GM12878 (cell line): ENCODE measurements at regions of chr12 and their contacts with region 1.

Region 1: GRCh38 chr12:10235761-10236631 is 23.3 kb downstream of the GABARAPL1 start:
- DNase-seq: no peak
- ATAC-seq: peak; percentile 73
- H3K4me3 ChIP-seq: no peak overlapping the region
- H3K27ac ChIP-seq: no peak overlapping the region
- H3K4me1 ChIP-seq: 0 out of 2 replicates have a peak, but pooled peaks cover 4% of the 10 kb centered on the region
- H3K27me3 ChIP-seq: no peaks in the 10 kb centered on the region; a peak in 1 of 4 replicates
- CTCF ChIP-seq: peak; percentile 66 to 80 (median 70)
- EP300 ChIP-seq: no peak
- POLR2A ChIP-seq: no peak
- RAD21 ChIP-seq: peak; percentile 94

Region 2: DNA sequence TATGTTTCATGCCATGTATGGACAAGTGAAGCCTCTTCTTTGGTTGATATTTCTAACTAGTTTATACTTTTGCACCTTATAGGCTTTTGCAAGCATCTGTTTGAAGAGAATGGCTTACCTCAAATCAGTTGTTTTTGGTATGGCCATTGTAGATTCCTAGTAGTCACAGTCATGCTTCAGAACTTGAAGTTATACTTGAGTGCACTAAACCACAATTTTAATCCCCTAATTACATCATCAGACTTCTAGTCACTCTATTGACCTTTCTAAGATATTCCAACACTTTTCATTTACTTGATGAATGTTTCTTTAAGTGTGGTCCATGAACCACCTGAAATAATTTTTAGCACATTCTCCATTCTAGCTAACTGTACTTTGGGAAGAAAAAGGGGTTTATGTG is 609.7 kb before region 1 on chr12:
- CTCF ChIA-PET with region 1: no interaction called
- POLR2A ChIA-PET with region 1: no interaction called
- RAD21 ChIA-PET with region 1: no interaction called
- SMC1A ChIA-PET with region 1: no interaction called
- in situ Hi-C with region 1: no loop called
- intact Hi-C with region 1: no loop called
- DNase-seq: no peak
- ATAC-seq: no peak
- H3K4me3 ChIP-seq: no peak overlapping the region
- H3K27ac ChIP-seq: no peak overlapping the region
- H3K4me1 ChIP-seq: no peaks in the 10 kb centered on the region
- H3K27me3 ChIP-seq: no peaks in the 10 kb centered on the region
- CTCF ChIP-seq: no peak
- EP300 ChIP-seq: no peak
- POLR2A ChIP-seq: no peak
- RAD21 ChIP-seq: no peak

Region 3: GRCh38 chr12:10153271-10154144 is 82.5 kb before region 1 on chr12:
- CTCF ChIA-PET with region 1: interaction called, 10 read pairs
- POLR2A ChIA-PET with region 1: no interaction called
- RAD21 ChIA-PET with region 1: interaction called, 3 read pairs
- SMC1A ChIA-PET with region 1: interaction called, 5 read pairs
- in situ Hi-C with region 1: no loop called
- intact Hi-C with region 1: no loop called
- DNase-seq: no peak
- ATAC-seq: peak; percentile 84
- H3K4me3 ChIP-seq: peak overlapping the region; percentile 67
- H3K27ac ChIP-seq: 0 out of 2 replicates have a peak overlapping the region, but pooled peaks have one; percentile 6
- H3K4me1 ChIP-seq: 0 out of 2 replicates have a peak, but pooled peaks cover 4% of the 10 kb centered on the region
- H3K27me3 ChIP-seq: peaks cover 0 to 5% of the 10 kb centered on the region in 2 experiments; a peak in 2 of 4 replicates
- CTCF ChIP-seq: peak; percentile 71 to 80 (median 76)
- EP300 ChIP-seq: no peak
- POLR2A ChIP-seq: no peak
- RAD21 ChIP-seq: peak; percentile 70

Region 4: DNA sequence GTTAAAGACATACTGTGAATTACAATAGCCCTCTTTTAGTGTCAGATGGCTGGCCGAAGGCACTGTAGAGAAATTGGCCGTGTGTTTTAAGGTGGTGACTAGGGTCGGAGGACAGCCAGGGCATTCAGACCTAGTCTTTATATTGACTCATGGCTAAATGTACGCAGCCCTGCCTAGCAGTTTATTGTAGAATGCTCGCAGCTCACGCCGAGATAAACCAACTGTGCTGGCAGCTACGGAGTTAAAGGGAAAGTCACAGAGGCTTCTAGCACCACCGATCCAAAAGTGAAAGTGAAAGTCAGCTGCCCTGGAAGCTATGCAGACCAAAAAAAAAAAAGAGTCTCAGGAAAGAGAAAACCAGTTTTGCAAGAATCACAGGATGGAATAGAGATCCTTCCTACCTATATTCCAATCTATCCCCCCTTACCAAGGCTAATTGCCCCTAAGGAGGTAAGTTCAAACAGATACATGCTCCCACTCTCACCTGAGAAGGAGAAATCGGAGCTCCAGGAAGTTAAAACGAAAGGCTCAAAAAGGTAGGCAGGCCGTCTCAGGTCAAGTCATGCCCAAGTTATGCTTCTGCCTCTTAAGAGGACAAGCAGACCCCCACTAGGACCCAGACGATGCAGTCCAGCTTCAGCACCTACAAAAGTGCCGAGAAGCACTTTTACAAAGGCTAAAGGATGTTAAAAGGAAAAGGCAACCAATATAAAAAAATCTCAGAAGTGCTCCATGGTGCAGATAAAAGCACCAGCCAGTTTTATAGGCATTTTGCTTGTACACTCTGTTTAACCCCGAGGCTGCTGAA is 129.0 kb after region 1 on chr12:
- CTCF ChIA-PET with region 1: interaction called, 12 read pairs
- POLR2A ChIA-PET with region 1: no interaction called
- RAD21 ChIA-PET with region 1: interaction called, 7 read pairs
- SMC1A ChIA-PET with region 1: interaction called, 12 read pairs
- in situ Hi-C with region 1: no loop called
- intact Hi-C with region 1: no loop called
- DNase-seq: peak; percentile 53
- ATAC-seq: peak; percentile 71
- H3K4me3 ChIP-seq: peak overlapping the region; percentile 72
- H3K27ac ChIP-seq: peak overlapping the region; percentile 72
- H3K4me1 ChIP-seq: peaks cover 21% of the 10 kb centered on the region
- H3K27me3 ChIP-seq: no peaks in the 10 kb centered on the region
- CTCF ChIP-seq: no peak
- EP300 ChIP-seq: no peak
- POLR2A ChIP-seq: no peak
- RAD21 ChIP-seq: no peak

Region 5: DNA sequence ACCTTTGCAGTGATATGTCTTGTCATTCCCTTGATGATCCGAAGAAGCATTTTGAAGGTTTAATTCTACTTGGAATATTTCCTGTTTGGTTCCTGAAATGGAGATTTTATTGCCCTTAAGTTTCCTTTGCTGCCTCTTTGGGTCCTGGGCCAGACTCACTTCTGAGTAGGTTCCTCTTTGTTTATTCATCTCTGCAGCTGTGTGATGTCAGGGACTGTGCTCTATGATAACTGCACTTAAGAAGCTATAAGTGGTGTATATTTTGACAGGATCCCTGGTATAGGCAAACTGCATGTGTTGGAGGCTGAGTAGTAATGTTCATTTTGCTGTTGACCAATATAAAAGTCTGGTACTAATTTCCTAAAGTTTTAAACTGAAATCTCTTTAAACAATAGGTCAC is 173.4 kb after region 1 on chr12 and contains the start of gene KLRC4:
- CTCF ChIA-PET with region 1: interaction called, 11 read pairs
- POLR2A ChIA-PET with region 1: no interaction called
- RAD21 ChIA-PET with region 1: no interaction called
- SMC1A ChIA-PET with region 1: interaction called, 3 read pairs
- in situ Hi-C with region 1: no loop called
- intact Hi-C with region 1: no loop called
- DNase-seq: no peak
- ATAC-seq: peak; percentile 51
- H3K4me3 ChIP-seq: no peak within 1 kb of the TSS
- H3K27ac ChIP-seq: no peak within 1 kb of the TSS
- H3K4me1 ChIP-seq: no peaks in the 10 kb centered on the region; the same call in 1 of the 2 replicates
- H3K27me3 ChIP-seq: no peaks in the 10 kb centered on the region
- CTCF ChIP-seq: no peak
- EP300 ChIP-seq: no peak
- POLR2A ChIP-seq: no peak
- RAD21 ChIP-seq: no peak
- polyA plus RNA-seq, gene KLRC4: 0.34 TPM in 1 of 2 experiments, not detected in the other

Region 6: GRCh38 chr12:10562306-10562933 is 326.4 kb after region 1 on chr12:
- CTCF ChIA-PET with region 1: interaction called, 37 read pairs
- POLR2A ChIA-PET with region 1: interaction called, 6 read pairs
- RAD21 ChIA-PET with region 1: interaction called, 24 read pairs
- SMC1A ChIA-PET with region 1: interaction called, 41 read pairs
- in situ Hi-C with region 1: loop called (anchors 5 kb)
- intact Hi-C with region 1: loop called (anchors 1 kb)
- DNase-seq: no peak
- ATAC-seq: peak; percentile 39; the same call in 2 of the 3 replicates
- H3K4me3 ChIP-seq: no peak overlapping the region
- H3K27ac ChIP-seq: no peak overlapping the region
- H3K4me1 ChIP-seq: peaks cover 4% of the 10 kb centered on the region
- H3K27me3 ChIP-seq: no peaks in the 10 kb centered on the region
- CTCF ChIP-seq: peak; percentile 45 to 69 (median 56); a peak in 5 of 6 replicates
- EP300 ChIP-seq: no peak
- POLR2A ChIP-seq: no peak
- RAD21 ChIP-seq: peak; percentile 96

Region 7: DNA sequence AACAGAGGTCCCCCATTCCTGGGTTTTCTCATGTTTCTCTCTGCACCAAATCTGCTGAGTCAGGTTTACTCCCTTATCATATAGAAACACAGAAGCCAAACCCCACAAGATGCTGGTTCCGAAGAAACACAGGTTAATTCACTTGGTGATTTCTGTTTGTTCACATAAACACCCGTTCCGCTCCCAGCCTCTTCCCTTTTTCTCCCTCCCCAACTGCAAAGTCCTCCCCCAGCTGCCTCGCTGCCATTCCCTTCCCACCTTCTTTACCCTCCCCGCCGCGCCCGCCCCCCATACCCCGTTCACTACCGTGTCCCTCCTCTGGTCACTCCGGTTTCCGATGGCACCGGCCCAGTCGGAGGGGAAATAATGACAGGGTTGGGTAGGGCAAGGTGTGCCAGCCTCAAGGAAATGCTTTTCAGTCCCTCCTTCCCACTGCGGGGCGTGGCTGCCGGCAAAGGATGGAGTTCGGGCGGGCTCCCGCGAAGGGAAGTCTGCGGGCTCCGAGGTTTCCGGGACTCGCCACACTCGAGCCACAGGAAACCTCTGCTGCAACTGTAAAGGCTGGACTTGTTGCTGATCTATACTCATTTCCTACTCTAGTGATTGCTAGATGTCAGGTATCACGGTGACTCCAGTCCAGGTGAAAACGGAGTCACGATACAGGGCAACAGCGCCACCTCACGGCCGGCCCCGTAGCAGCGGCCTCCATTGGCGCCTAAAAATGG is 437.8 kb after region 1 on chr12 and contains the start of gene STYK1:
- CTCF ChIA-PET with region 1: interaction called, 8 read pairs
- POLR2A ChIA-PET with region 1: no interaction called
- RAD21 ChIA-PET with region 1: interaction called, 4 read pairs
- SMC1A ChIA-PET with region 1: interaction called, 4 read pairs
- in situ Hi-C with region 1: loop called (anchors 5 kb)
- intact Hi-C with region 1: loop called (anchors 1 kb)
- DNase-seq: peak; percentile 24
- ATAC-seq: peak; percentile 84
- H3K4me3 ChIP-seq: peak within 1 kb of the TSS; percentile 32
- H3K27ac ChIP-seq: no peak within 1 kb of the TSS
- H3K4me1 ChIP-seq: peaks cover 14% of the 10 kb centered on the region; the same call in 1 of the 2 replicates
- H3K27me3 ChIP-seq: peaks cover 0 to 2% of the 10 kb centered on the region in 2 experiments; a peak in 1 of 4 replicates
- CTCF ChIP-seq: peak; percentile 81 to 87 (median 83)
- EP300 ChIP-seq: no peak
- POLR2A ChIP-seq: no peak
- RAD21 ChIP-seq: peak; percentile 83
- polyA plus RNA-seq, gene STYK1: 0.73 to 0.87 TPM